HEK293 (cell line): ENCODE measurements at regions of chr10 and their contacts with region 1.

Region 1: DNA sequence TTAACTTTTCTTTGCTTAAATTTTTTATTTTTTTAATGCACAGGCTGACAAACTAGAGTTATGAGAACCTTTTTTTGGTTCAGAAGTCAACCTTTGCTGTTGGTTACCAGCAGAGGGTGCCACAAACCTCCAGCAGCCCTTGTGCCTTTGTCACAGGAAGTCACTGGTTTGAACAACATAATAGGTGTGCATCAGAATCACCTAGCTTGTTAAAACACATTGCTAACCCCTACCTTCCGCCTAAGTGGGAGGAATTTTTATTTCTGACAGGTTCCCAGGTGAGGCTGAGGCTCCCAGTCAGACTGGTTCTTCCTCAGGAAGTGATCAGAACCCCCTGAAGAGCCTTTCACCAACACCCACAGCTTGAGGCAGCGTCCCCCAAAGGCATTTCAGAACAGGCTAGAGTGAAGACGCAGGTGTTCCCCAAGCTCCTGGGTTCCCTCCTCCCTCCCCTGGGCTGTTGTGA is 22.6 kb upstream of the VDAC2 start:
- H3K4me3 ChIP-seq: no peak overlapping the region
- H3K27ac ChIP-seq: no peak overlapping the region
- H3K4me1 ChIP-seq: no peaks in the 10 kb centered on the region
- CTCF ChIP-seq: peak; percentile 52; the same call in 1 of the 2 replicates

Region 2: GRCh38 chr10:73644015-73644743 is 1543.8 kb before region 1 on chr10:
- CTCF ChIA-PET with region 1: interaction called, 12 read pairs
- POLR2A ChIA-PET with region 1: no interaction called
- H3K4me3 ChIP-seq: no peak overlapping the region
- H3K27ac ChIP-seq: no peak overlapping the region
- H3K4me1 ChIP-seq: no peaks in the 10 kb centered on the region
- CTCF ChIP-seq: peak; percentile 79

Region 3: DNA sequence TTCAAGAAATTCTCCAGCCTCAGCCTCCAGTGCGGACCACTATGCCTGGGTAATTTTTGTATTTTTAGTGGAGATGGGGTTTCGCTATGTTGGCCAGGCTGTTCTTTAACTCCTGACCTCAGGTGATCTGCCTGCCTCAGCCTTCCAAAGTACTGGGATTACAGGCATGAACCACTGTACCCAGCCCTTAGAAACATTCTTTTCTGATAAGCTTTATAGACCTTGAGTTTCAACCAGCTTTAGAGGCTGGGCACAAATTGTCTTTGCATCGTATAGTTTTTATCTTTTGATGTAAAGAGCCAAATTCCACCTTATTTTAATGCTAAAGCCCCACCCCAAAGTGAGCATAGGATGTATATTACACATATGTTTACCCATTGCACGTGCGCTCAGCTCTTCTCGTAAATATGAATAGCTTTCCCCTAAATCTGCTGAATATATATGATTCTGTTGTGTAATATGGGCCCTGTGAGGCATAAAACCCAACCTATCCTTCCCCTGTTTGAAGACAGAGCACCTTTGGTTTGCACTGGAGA is 912.2 kb before region 1 on chr10:
- CTCF ChIA-PET with region 1: no interaction called
- POLR2A ChIA-PET with region 1: no interaction called
- H3K4me3 ChIP-seq: no peak overlapping the region
- H3K27ac ChIP-seq: no peak overlapping the region
- H3K4me1 ChIP-seq: no peaks in the 10 kb centered on the region
- CTCF ChIP-seq: no peak

Region 4: DNA sequence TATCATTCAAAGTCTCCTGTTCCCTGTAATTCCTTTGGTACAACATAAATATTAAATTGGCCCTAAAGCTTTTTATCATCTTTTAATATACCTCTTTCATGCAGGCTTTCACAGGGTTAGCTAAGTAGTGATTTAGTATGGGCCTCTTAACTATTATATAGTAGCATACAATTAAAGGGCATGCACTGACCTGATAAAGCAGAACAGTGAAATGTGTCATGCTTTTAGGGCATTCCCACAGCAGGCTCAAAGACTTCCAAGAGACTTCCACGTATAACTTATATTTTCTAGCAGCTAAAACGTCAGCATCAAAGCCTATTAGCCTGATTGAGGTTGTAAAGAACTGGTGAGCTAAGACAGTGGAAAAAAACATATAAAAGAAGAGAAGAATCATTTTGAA is 41.2 kb before region 1 on chr10:
- CTCF ChIA-PET with region 1: no interaction called
- POLR2A ChIA-PET with region 1: no interaction called
- H3K4me3 ChIP-seq: no peak overlapping the region
- H3K27ac ChIP-seq: no peak overlapping the region
- H3K4me1 ChIP-seq: no peaks in the 10 kb centered on the region
- CTCF ChIP-seq: no peak

Region 5: DNA sequence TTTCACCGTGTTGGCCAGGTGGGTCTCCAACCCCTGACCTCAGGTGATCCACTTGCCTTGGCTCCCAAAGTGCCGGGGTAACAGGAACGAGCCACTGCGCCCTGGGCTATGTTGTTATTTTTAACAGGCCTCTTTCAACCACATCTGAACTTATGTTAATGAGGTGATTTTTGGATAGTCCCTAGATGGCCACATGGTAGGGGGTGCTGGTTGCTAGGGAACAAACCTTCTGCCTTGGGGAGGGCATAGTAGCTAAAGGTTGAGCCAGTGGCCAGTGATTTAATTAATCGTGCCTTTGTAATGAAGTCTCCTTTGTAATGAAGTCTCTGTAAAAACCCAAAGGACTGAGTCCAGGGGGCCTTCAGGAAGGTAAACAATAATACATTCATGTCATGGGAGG is 38.7 kb after region 1 on chr10:
- CTCF ChIA-PET with region 1: interaction called, 28 read pairs
- POLR2A ChIA-PET with region 1: interaction called, 5 read pairs
- H3K4me3 ChIP-seq: no peak overlapping the region
- H3K27ac ChIP-seq: no peak overlapping the region
- H3K4me1 ChIP-seq: peaks cover 15% of the 10 kb centered on the region
- CTCF ChIP-seq: no peak

Region 6: DNA sequence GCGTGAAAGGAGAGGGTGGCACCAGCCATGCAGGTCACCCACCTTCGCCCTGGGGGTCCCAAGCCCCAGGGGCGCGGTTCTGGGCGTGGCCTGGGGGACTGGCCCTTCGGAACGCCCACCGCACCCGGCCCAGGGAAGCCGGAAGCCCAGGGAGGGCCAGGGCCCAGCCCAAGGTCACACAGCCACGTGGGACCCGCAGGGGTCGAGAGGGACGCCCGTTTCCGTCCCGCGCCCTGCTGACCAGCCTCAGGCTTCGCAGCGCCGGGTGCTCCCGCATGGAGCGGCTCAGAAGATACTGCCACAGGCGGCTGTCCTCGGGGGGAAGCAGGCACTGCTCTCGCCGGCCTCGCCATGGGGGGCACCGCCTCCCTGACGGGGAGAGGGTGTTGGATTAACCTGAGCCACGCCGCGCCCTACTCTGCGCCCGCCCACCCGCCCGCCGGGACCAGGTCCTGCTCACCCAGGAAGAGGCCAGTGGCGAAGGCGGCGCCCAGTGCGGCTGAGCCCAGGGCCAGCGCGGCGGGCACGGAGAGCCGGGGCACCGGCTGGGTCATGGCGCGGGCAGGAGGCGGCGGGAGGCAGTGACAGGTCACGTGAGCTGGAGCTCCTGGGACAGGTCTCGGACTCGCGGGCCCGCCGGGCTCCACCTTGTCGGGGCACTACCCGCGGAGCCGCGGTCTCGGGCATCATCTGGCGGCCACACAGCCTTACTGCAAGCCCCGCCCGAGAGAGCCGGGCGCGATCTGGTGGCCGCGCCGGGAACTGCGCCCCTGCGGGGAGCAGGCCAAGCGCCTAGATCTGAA is 47.6 kb after region 1 on chr10 and contains the start of gene COMTD1:
- CTCF ChIA-PET with region 1: interaction called, 47 read pairs
- POLR2A ChIA-PET with region 1: interaction called, 9 read pairs
- H3K4me3 ChIP-seq: peak within 1 kb of the TSS; percentile 62
- H3K27ac ChIP-seq: peak within 1 kb of the TSS; percentile 92
- H3K4me1 ChIP-seq: no peaks in the 10 kb centered on the region; the same call in 1 of the 2 replicates
- CTCF ChIP-seq: peak; percentile 100

Region 7: DNA sequence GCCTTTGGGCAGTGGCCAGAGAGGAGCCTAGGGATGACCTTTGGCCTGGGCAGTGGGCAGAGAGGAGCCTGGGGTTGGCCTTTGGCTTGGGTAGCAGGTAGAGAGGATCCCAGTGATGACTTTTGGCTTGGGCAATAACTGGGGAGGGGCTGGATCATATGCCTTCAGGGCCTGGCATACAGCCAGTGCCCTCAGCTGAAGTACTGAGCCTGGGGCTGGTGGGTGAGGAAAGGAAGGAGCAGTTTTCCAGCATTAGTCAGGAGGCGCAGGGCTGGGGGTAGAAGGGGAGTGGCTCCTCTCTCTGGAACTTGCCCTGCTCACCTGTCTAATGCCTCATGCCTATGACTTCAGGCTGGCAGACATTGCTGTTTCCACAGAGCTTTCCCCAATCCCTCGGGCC is 62.9 kb after region 1 on chr10:
- CTCF ChIA-PET with region 1: no interaction called
- POLR2A ChIA-PET with region 1: no interaction called
- H3K4me3 ChIP-seq: no peak overlapping the region
- H3K27ac ChIP-seq: no peak overlapping the region
- H3K4me1 ChIP-seq: no peaks in the 10 kb centered on the region
- CTCF ChIP-seq: no peak

Region 8: GRCh38 chr10:76051007-76051936 is 863.3 kb after region 1 on chr10:
- CTCF ChIA-PET with region 1: no interaction called
- POLR2A ChIA-PET with region 1: no interaction called
- H3K4me3 ChIP-seq: no peak overlapping the region
- H3K27ac ChIP-seq: no peak overlapping the region
- H3K4me1 ChIP-seq: no peaks in the 10 kb centered on the region
- CTCF ChIP-seq: no peak